Head of caudate nucleus (tissue), 42 donors: ENCODE measurements at regions of chr9 and their contacts with region 1.

Region 1: GRCh38 chr9:133406480-133407307 is 11.1 kb downstream of the REXO4 start:
- DNase-seq: peak; percentile 70 to 91 (median 82)

Region 2: GRCh38 chr9:133485361-133486260 is 78.9 kb after region 1 on chr9:
- intact Hi-C with region 1: loop called (anchors 5 kb)
- DNase-seq: no peak